CD8-positive, alpha-beta memory T cell (primary cell): ENCODE measurements at regions of chr17 and their contacts with region 1.

Region 1: DNA sequence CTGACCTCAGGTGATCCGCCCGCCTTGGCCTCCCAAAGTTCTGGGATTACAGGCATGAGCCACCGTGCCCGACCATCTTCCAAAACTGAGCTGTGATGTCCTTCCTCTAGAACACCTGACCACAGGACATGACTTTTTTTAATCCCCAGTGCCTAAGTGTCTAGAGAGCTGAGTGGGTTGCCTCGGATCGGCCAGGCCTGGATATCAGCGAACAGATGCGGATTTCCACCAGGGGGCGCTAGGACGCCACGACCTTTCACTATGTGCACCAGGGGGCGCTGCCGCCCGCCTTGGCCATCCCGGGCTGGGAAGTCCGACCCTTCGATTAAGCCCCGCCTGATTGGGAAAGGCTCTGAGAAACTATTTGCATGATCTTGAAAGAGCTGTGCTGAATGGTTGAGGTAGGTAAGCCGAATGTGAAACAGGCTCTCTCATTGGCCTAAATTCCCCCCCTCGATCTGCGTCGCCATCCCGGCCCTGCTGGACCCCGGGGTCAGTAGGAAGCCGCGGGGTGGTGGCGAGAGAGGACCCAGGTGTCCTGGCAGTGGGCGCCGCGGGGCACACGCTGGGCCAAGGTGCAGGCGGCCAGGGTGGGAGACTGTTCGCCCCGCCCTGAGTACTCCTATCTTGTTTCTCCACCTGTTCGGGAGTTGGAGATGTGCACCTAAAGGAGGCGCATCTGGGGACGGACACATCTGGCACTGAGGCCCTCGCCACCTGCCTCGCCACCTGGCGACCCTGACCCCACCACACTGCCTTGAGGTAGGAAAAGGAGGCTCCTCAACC is at the start of gene ACBD4:
- DNase-seq: peak; percentile 95 to 98 (median 96)
- H3K4me3 ChIP-seq: peak within 1 kb of the TSS; percentile 78
- H3K4me3 Mint-ChIP-seq: peak within 1 kb of the TSS; percentile 87 to 95 (median 89)
- H3K27ac ChIP-seq: peak within 1 kb of the TSS; percentile 43
- H3K27ac Mint-ChIP-seq: peak within 1 kb of the TSS; percentile 66 to 86 (median 83)
- H3K4me1 ChIP-seq: peaks cover 14% of the 10 kb centered on the region
- H3K4me1 Mint-ChIP-seq: peaks cover 15 to 35% (median 20%) of the 10 kb centered on the region in 3 donors
- H3K27me3 ChIP-seq: no peaks in the 10 kb centered on the region
- H3K27me3 Mint-ChIP-seq: peaks cover 0 to 4% of the 10 kb centered on the region in 2 donors
- total RNA-seq, gene ACBD4: 8.8 to 9.7 TPM

Region 2: GRCh38 chr17:44968226-44969143 is 166.9 kb before region 1 on chr17 and contains the start of gene C1QL1:
- CTCF ChIA-PET with region 1: no interaction called
- POLR2A ChIA-PET with region 1: no interaction called
- DNase-seq: peak; percentile 71 to 84 (median 80)
- H3K4me3 ChIP-seq: peak within 1 kb of the TSS; percentile 54
- H3K4me3 Mint-ChIP-seq: peak within 1 kb of the TSS; percentile 51 to 87 (median 78)
- H3K27ac ChIP-seq: no peak within 1 kb of the TSS
- H3K27ac Mint-ChIP-seq: peak within 1 kb of the TSS in 1 of 8 donors; percentile 3
- H3K4me1 ChIP-seq: peaks cover 27% of the 10 kb centered on the region
- H3K4me1 Mint-ChIP-seq: peaks cover 21 to 41% (median 21%) of the 10 kb centered on the region in 3 donors
- H3K27me3 ChIP-seq: peaks cover 47% of the 10 kb centered on the region
- H3K27me3 Mint-ChIP-seq: peaks cover 35 to 67% of the 10 kb centered on the region in 2 donors
- total RNA-seq, gene C1QL1: not detected

Region 3: DNA sequence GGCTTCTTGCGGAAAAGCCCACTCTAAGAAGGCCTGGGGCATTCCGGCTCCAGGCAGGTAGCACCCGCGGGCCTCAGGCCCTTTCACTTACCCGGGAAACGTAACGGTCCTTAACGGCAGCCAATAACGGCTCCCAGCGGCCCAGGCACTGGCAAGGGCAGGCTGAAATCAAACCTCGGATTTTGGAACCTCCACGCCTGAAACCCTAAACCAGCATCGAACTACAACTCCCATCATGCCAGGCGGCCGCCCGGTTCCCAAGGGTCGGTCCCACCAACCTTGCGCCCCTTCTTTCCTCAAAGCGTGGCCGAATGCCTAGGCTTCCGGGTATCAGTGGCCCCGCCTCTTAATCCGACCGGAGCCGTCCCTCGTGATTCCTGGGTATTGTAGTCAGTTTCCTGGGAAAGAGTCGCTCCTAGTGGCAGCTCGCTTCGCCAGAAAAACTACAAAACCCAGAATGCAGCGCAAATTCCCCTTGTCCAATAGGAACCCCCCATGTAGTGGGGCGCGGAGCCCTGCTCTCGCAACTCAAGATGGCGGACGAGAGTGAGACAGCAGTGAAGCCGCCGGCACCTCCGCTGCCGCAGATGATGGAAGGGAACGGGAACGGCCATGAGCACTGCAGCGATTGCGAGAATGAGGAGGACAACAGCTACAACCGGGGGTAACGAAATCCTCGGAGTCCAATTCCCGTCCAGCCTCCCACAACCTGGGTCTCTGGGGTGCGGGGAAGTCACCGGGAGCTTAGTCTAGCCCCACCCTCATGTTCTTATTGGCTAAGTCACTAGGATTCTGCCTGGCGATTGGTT is 74.4 kb before region 1 on chr17 and contains the start of gene NMT1:
- CTCF ChIA-PET with region 1: interaction called, 10 read pairs
- POLR2A ChIA-PET with region 1: no interaction called
- DNase-seq: peak; percentile 91 to 99 (median 97)
- H3K4me3 ChIP-seq: peak within 1 kb of the TSS; percentile 85
- H3K4me3 Mint-ChIP-seq: peak within 1 kb of the TSS; percentile 95 to 100 (median 99)
- H3K27ac ChIP-seq: peak within 1 kb of the TSS; percentile 84
- H3K27ac Mint-ChIP-seq: peak within 1 kb of the TSS; percentile 92 to 100 (median 99)
- H3K4me1 ChIP-seq: peaks cover 38% of the 10 kb centered on the region
- H3K4me1 Mint-ChIP-seq: peaks cover 35 to 62% (median 53%) of the 10 kb centered on the region in 3 donors
- H3K27me3 ChIP-seq: no peaks in the 10 kb centered on the region
- H3K27me3 Mint-ChIP-seq: peaks cover 0 to 2% of the 10 kb centered on the region in 2 donors
- total RNA-seq, gene NMT1: 189 to 198 TPM

Region 4: DNA sequence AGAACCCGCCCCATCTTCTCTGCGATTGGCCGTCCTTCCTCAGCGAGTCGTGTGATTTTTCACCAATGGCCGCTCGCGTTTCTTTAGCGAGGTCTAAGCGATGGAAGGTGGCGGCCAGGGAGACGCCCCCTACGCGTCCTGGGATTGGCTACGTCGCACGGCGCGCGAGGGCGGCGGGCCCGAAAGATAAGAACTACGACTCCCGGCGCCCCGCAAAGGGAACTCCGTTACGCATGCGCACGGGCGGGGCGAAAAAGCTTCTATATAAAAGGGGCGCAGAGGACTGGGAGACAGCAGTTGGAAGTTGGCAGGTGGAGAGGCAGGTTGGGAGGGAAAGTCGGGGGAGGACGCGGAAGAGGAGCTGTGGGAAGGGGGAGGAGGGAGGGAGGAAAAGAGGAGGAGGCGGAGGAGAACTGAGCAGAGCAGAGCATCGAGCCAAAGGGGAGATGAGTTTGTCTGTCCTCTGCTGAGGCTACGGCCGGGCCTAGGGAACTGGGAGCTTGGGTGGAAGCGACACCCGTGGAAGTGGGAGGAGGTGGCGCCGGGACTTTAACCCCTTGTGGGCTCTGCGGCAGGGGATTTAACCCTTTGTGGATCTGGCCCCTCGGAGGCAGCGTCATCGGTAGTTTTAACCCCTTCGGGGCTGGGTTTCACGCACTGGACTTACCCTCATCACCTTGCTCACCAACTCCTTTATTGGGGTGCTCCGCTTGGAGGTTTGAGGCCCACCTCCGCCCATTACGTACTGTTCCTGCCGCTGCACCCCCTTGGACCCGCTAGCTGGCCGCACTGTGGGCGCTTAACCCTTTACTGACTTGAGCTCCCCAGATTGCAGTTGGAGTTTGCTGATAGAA is 13.0 kb after region 1 on chr17 and contains the start of gene HEXIM1:
- CTCF ChIA-PET with region 1: interaction called, 315 read pairs
- POLR2A ChIA-PET with region 1: interaction called, 73 read pairs
- DNase-seq: peak; percentile 97 to 100 (median 100)
- H3K4me3 ChIP-seq: peak within 1 kb of the TSS; percentile 91
- H3K4me3 Mint-ChIP-seq: peak within 1 kb of the TSS; percentile 90 to 99 (median 95)
- H3K27ac ChIP-seq: peak within 1 kb of the TSS; percentile 98
- H3K27ac Mint-ChIP-seq: peak within 1 kb of the TSS; percentile 97 to 100 (median 99)
- H3K4me1 ChIP-seq: peaks cover 43% of the 10 kb centered on the region
- H3K4me1 Mint-ChIP-seq: peaks cover 47 to 67% (median 61%) of the 10 kb centered on the region in 3 donors
- H3K27me3 ChIP-seq: no peaks in the 10 kb centered on the region
- H3K27me3 Mint-ChIP-seq: peaks cover 0 to 11% of the 10 kb centered on the region in 2 donors
- total RNA-seq, gene HEXIM1: 48.3 to 51.1 TPM

Region 5: DNA sequence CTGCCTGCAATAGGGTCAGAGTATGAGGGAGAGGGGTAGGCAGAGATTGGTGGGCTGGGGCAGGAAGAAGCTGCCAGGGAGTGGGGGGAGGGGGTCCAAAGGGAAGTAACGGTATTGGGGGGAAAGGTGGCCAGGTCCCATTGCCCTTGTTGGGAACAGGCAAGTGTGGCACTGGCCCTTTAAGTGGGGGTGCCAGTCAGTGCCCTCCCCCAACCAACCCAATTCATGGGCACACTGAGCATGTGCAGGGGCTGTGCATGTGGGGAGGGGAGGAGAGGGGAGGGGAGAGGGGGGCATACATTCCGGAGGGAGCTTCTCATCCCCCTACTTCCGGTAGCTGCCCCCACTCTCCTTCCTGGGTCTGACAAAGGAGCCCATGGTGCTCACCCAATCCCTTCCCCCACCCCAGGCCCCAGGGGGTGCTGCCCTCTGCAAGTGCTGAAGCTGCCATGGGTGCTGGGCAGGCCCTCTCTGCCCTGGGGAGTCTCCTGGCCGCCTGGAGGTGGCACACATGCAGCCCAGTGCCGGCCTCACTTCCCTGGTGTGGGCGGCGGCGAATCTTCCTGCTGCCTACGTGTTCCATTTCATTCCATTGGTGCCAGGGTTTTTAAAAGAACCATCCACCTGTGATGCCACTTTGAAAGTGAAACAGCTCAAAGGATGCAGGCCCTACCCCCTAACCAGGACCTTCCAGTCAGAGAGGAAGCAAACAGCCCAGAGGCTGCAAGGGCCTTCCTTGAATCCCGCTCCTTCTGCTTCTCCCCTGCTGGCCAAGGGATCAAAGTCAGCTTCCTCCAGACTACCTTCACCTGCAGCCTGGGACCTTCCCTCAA is 37.3 kb after region 1 on chr17:
- CTCF ChIA-PET with region 1: interaction called, 41 read pairs
- POLR2A ChIA-PET with region 1: no interaction called
- DNase-seq: peak; percentile 10 to 68 (median 33)
- H3K4me3 ChIP-seq: peak overlapping the region; percentile 62
- H3K4me3 Mint-ChIP-seq: peak overlapping the region; percentile 51 to 81 (median 77)
- H3K27ac ChIP-seq: peak overlapping the region; percentile 0
- H3K27ac Mint-ChIP-seq: peak overlapping the region; percentile 60 to 98 (median 88)
- H3K4me1 ChIP-seq: peaks cover 23% of the 10 kb centered on the region
- H3K4me1 Mint-ChIP-seq: peaks cover 7 to 21% (median 9%) of the 10 kb centered on the region in 3 donors
- H3K27me3 ChIP-seq: no peaks in the 10 kb centered on the region
- H3K27me3 Mint-ChIP-seq: no peaks in the 10 kb centered on the region

Region 6: GRCh38 chr17:45197555-45198334 is 62.4 kb after region 1 on chr17:
- CTCF ChIA-PET with region 1: interaction called, 199 read pairs
- POLR2A ChIA-PET with region 1: interaction called, 9 read pairs
- DNase-seq: peak; percentile 74 to 86 (median 83)
- H3K4me3 ChIP-seq: no peak overlapping the region
- H3K4me3 Mint-ChIP-seq: no peak overlapping the region
- H3K27ac ChIP-seq: no peak overlapping the region
- H3K27ac Mint-ChIP-seq: no peak overlapping the region
- H3K4me1 ChIP-seq: no peaks in the 10 kb centered on the region
- H3K4me1 Mint-ChIP-seq: peaks cover 1 to 5% (median 4%) of the 10 kb centered on the region in 3 donors
- H3K27me3 ChIP-seq: no peaks in the 10 kb centered on the region
- H3K27me3 Mint-ChIP-seq: no peaks in the 10 kb centered on the region

Region 7: DNA sequence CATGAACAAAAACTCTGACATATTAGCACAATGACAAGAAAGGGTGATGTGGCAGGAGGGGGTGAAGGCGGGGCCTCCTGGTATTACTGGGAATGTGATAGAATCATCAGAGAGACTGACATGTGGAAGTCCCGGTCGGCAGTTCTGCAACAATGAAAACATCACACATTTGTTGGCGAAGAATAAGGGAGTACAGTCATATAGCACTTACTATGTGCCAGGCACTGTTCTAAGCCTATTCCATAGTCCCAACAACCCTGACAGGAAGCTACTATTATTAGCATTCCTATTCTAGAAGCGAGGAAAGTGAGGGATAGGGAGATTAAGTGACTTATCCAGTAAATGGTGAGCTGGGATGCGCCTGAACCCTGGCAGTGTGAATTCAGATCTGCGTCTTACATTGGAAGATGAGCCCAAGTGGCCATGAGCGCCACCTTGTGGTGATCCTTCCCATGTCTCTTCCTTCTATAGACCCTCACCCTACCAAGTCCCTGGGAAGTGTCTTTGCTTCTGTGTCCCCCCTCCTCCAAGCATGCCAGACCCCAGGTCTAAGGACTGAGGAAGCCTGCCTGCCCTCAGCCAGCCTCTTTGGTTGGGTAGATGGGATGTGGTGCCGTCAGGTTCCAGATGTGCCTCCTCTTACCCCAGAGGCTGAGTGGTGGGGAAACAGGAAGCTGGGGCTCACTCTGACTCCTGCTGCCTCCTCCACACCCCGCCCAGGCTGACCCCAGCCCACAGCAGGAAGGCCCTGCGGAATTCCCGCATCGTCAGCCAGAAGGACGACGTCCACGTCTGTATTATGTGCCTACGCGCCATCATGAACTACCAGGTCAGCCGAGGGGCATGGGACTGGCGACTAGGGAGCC is 100.3 kb after region 1 on chr17:
- CTCF ChIA-PET with region 1: interaction called, 17 read pairs
- POLR2A ChIA-PET with region 1: no interaction called
- DNase-seq: peak; percentile 69 to 84 (median 70)
- H3K4me3 ChIP-seq: no peak overlapping the region
- H3K4me3 Mint-ChIP-seq: peak overlapping the region in 5 of 7 donors; percentile 24 to 72 (median 30)
- H3K27ac ChIP-seq: no peak overlapping the region
- H3K27ac Mint-ChIP-seq: peak overlapping the region; percentile 79 to 98 (median 90)
- H3K4me1 ChIP-seq: peaks cover 35% of the 10 kb centered on the region
- H3K4me1 Mint-ChIP-seq: peaks cover 54 to 63% (median 59%) of the 10 kb centered on the region in 3 donors
- H3K27me3 ChIP-seq: no peaks in the 10 kb centered on the region
- H3K27me3 Mint-ChIP-seq: no peaks in the 10 kb centered on the region

Region 8: DNA sequence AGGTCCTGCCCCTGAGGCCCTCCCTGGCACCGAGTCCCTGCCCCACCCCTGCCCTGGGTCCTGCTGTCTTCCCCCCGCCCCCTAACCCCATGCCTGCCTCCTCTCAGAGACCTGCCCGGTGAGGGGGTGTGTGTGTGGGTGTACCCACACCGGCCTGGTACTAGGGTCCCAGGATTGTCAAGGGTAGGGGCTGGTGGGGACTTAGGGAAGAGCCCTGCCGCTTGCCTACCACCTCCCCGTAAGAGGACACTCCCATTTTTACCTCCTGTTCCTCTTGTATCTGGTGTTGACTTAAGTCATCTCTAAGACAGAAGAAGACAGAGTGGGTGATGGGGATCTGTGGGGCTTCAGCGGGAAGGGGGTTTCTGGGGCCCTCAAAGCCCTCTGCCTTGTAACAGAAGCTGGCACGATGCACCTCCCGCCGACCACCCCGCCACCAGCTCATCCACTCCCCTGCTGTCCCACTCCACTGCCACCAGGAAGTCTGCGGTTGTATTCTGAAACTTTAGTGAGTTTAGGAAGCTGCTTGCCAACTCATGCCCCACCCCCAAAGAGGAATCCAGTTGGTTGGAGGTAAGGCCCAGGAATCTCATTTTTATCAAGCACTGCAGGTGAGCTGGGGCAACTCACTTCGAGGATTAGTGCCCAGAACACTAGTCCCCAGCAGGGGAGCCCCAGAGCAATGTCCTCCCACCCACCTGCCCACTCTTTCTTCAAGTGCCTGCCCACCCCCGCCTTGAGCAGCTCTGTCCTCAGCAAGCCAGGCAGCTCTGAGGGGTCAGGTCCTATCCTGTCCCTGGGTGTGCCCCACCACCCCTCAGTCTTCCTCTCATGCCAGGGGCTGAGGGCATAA is 121.0 kb after region 1 on chr17:
- CTCF ChIA-PET with region 1: interaction called, 11 read pairs
- POLR2A ChIA-PET with region 1: no interaction called
- DNase-seq: no peak
- H3K4me3 ChIP-seq: no peak overlapping the region
- H3K4me3 Mint-ChIP-seq: peak overlapping the region in 1 of 7 donors; percentile 64
- H3K27ac ChIP-seq: no peak overlapping the region
- H3K27ac Mint-ChIP-seq: peak overlapping the region in 7 of 8 donors; percentile 23 to 81 (median 61)
- H3K4me1 ChIP-seq: peaks cover 45% of the 10 kb centered on the region
- H3K4me1 Mint-ChIP-seq: peaks cover 31 to 55% (median 45%) of the 10 kb centered on the region in 3 donors
- H3K27me3 ChIP-seq: no peaks in the 10 kb centered on the region
- H3K27me3 Mint-ChIP-seq: no peaks in the 10 kb centered on the region